Activated CD4-positive, alpha-beta T cell treated with anti-CD3 and anti-CD28 coated beads for 36 hours (primary cell): ENCODE measurements at regions of chr9 and their contacts with region 1.

Region 1: GRCh38 chr9:93028448-93029006 is 30.0 kb upstream of the SUSD3 start:
- DNase-seq: peak; percentile 71
- ATAC-seq: peak; percentile 86
- H3K4me3 Mint-ChIP-seq: peak overlapping the region; percentile 51
- H3K27ac Mint-ChIP-seq: peak overlapping the region; percentile 96
- H3K4me1 Mint-ChIP-seq: peaks cover 80% of the 10 kb centered on the region
- H3K27me3 Mint-ChIP-seq: no peaks in the 10 kb centered on the region

Region 2: DNA sequence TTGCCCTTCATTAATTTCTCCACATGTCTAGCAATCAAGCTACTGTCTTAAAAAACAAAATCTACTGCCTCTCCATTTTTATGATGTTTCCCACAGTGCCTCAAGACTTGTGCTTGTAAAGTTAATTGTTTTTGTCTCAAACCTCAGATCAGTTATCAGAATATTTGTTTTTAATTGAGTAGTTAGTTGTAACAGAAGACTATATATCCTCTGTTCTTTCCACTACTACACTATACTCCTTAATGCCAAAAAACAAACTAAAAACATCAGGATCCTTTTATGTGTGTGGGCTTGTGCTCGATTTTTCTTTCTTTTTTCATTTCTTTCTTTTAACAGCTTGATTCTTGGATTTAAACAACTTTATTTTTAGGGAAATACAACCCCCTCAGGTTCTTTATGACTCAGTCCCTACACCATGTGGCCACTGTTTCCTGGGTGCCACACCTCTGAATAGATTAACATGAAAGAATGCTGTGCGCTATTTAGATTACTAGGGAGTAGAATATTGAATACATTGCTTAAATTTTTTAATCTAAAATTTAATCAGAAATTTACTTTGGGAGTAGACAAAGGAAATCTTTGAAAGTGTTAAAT is 547.4 kb before region 1 on chr9:
- CTCF ChIA-PET with region 1: no interaction called
- POLR2A ChIA-PET with region 1: no interaction called
- intact Hi-C with region 1: no loop called
- DNase-seq: no peak
- ATAC-seq: no peak
- H3K4me3 Mint-ChIP-seq: no peak overlapping the region
- H3K27ac Mint-ChIP-seq: no peak overlapping the region
- H3K4me1 Mint-ChIP-seq: peaks cover 5% of the 10 kb centered on the region
- H3K27me3 Mint-ChIP-seq: no peaks in the 10 kb centered on the region

Region 3: GRCh38 chr9:92954049-92954861 is 74.3 kb before region 1 on chr9:
- CTCF ChIA-PET with region 1: interaction called, 5 read pairs
- POLR2A ChIA-PET with region 1: no interaction called
- intact Hi-C with region 1: loop called in 1 of 2 experiments (anchors 2 kb)
- DNase-seq: peak; percentile 89
- ATAC-seq: peak; percentile 85
- H3K4me3 Mint-ChIP-seq: peak overlapping the region; percentile 66
- H3K27ac Mint-ChIP-seq: peak overlapping the region; percentile 97
- H3K4me1 Mint-ChIP-seq: peaks cover 78% of the 10 kb centered on the region
- H3K27me3 Mint-ChIP-seq: no peaks in the 10 kb centered on the region

Region 4: DNA sequence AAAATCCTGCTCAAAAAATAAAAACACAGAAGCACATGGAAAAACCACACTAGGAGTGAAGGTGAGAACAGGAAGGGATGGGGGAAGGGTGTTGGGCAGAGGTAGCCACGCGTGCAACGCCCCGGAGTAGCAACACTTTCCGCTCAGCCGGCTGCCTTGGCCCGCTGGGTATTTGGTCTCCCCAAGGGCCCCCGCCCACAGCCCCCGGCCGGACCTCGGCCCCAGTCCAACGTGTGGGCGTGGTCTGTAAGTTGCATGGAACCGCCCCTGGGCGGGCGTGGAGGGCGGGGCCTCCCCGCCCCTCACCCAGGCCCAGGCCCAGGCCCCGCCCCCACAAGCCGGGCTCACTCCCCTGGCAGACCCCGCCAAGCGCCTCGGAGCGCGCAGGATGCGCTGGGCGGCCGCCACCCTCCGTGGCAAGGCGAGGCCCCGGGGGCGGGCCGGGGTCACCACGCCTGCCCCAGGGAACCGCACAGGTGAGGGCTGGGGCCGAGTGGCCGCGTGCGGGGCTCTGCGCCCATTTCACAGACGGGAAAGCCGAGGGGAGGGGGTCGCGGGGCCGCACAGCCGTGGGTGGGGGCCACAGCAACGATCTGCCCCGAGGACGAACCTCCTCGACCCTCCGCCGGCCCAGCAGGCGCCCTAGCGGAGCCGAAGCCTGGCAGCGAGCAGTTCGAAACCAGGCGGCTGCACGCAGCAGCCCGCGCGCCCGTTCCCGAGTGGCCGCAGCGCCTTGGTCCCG is 30.0 kb after region 1 on chr9 and contains the start of gene SUSD3:
- CTCF ChIA-PET with region 1: interaction called, 3 read pairs
- POLR2A ChIA-PET with region 1: interaction called, 3 read pairs
- intact Hi-C with region 1: loop called (anchors 1 to 5 kb)
- DNase-seq: peak; percentile 86
- ATAC-seq: peak; percentile 66
- H3K4me3 Mint-ChIP-seq: peak within 1 kb of the TSS; percentile 90
- H3K27ac Mint-ChIP-seq: peak within 1 kb of the TSS; percentile 98
- H3K4me1 Mint-ChIP-seq: peaks cover 55% of the 10 kb centered on the region
- H3K27me3 Mint-ChIP-seq: no peaks in the 10 kb centered on the region
- total RNA-seq, gene SUSD3: 51.4 to 57.9 TPM

Region 5: DNA sequence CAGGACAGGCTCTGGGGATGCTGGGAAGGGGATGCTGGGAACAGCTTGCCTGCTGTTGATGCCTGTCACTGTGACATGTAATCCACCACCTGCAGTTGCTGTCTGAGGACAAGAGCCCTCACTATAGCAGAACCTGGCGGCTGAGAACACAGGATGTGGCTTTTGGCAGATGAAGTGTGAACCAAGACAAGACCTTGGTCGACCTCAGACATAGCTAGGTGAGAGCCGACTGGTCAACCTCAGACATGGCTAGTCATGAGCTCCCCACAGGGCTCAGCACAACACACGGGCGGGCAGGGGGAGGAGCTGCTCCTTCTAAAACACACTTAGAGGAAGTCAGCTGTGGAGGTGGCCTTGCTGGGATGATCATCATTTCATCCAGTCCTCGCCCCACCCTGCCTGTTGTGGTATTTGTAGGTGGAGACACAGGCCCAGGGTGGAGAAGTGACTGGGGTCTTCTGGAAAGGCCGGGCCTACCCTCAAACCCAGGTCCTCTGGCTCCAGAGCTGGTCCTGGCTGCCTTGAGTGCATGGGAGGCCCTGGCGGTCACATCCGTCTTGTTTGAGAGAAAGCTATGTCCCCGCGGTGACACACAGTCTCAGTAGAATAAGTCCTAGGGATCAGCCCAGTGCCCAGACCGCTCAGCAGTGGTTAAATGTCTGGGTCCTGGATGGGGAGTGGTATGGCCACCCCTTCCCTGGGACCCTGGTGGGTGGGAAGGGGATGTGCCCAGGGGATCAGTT is 36.0 kb after region 1 on chr9:
- CTCF ChIA-PET with region 1: interaction called, 3 read pairs
- POLR2A ChIA-PET with region 1: interaction called, 3 read pairs
- intact Hi-C with region 1: loop called (anchors 1 to 5 kb)
- DNase-seq: peak; percentile 96
- ATAC-seq: peak; percentile 90
- H3K4me3 Mint-ChIP-seq: peak overlapping the region; percentile 76
- H3K27ac Mint-ChIP-seq: peak overlapping the region; percentile 98
- H3K4me1 Mint-ChIP-seq: peaks cover 94% of the 10 kb centered on the region
- H3K27me3 Mint-ChIP-seq: no peaks in the 10 kb centered on the region